Spleen (tissue), 13 donors: ENCODE measurements at regions of chr10 and their contacts with region 1.

Region 1: GRCh38 chr10:110368002-110368401 is 63.3 kb upstream of the SMNDC1 start:
- DNase-seq: no peak
- H3K4me3 ChIP-seq: no peak overlapping the region
- H3K27ac ChIP-seq: no peak overlapping the region
- H3K4me1 ChIP-seq: peaks cover 0 to 6% (median 0%) of the 10 kb centered on the region in 6 donors
- H3K27me3 ChIP-seq: no peaks in the 10 kb centered on the region
- CTCF ChIP-seq: no peak
- POLR2A ChIP-seq: no peak

Region 2: DNA sequence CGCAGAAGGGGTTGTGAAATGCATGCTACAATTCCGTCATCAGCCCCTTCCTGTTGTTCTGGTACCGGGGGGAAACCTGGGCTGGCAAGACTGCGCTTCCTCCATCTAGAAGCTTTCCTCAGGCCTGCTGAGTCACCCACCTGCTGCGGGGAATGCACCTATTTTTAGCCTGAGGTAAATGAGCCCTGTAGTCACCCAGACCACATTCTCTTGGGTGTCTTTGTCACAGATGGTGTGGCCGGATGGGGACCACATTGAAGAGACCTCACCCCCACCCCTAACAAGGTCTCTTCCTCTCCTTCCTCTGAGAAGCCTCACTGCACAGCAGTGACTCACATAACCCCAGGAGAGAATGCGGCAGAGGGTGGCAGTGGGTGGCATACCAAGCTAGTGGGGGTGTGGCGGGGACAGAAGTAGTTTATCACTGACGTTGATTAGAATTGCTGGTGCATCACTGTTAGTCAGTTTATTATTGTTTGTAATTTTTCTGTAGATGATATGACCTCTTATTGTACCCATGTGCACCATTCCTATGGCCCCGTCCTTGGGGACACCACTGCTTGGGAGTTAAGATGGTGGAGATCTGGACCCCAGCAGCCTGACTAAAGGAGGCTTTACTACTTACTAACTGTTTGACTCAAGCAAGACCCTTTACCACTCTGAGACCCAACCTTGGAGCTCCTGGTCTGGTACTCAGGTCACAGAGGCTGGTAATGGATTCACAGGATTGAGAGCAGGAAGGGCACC is 46.7 kb after region 1 on chr10:
- intact Hi-C with region 1: loop called (anchors 10 kb)
- DNase-seq: peak; percentile 91
- H3K4me3 ChIP-seq: peak overlapping the region in 1 of 8 donors; percentile 1
- H3K27ac ChIP-seq: peak overlapping the region in 7 of 8 donors; percentile 18 to 64 (median 51)
- H3K4me1 ChIP-seq: peaks cover 28 to 77% (median 60%) of the 10 kb centered on the region in 6 donors
- H3K27me3 ChIP-seq: peaks cover 0 to 9% (median 0%) of the 10 kb centered on the region in 7 donors
- CTCF ChIP-seq: peak in 1 of 11 experiments; percentile 10
- POLR2A ChIP-seq: no peak